ENCODE measurements at regions of chr18 and their contacts with region 1.

Region 1: GRCh38 chr18:7566567-7567473 is at the start of gene PTPRM:
- DNase-seq: peak; percentile 59 to 94 (median 70)

Region 2: GRCh38 chr18:7272311-7273049 is 294.3 kb before region 1 on chr18:
- intact Hi-C with region 1: loop called (anchors 1 kb)
- DNase-seq: peak; percentile 47 to 93 (median 73)

Region 3: GRCh38 chr18:7369006-7369405 is 197.8 kb before region 1 on chr18:
- intact Hi-C with region 1: loop called (anchors 10 kb)
- DNase-seq: no peak

Region 4: GRCh38 chr18:7459851-7460770 is 106.7 kb before region 1 on chr18:
- intact Hi-C with region 1: loop called (anchors 10 kb)
- DNase-seq: peak in 7 of 10 donors; percentile 13 to 89 (median 53)

Region 5: DNA sequence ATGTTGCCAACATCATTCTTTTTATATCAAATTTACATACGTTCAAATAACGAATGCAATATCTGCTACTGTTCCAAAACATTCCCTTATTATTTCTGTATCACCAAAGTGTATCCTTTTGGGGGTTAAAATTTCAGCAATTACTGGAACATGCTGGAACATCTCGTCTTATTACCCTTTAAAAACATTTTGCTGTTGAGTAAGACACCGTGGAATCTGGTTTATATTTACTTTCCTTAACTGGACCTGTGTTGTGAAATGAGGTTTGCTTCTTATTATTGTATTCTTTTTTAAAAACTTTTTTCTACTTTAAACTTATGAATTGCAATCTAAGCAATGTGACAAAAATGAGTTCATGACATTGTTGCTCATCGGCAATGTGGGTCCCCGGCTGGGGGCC is 87.1 kb before region 1 on chr18:
- intact Hi-C with region 1: no loop called
- DNase-seq: no peak

Region 6: DNA sequence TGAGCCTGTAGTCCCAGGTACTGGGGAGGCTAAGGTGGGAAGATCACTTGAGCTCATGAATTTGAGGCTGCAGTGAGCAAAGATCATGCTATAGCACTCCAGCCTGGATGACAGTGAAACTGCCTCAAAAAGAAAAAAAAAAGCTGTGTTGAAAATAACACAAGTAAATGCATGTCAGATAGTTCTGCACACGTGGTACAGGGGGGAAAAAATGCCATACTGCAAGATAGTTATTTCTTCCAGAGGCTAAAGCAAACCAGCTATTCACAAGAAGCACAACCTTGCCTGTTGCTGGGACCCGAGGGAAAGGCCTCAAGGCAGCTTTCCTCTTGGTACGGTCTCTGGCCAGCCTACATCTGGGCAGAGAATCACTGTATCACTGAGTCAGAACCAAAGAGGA is 1355.8 kb after region 1 on chr18:
- intact Hi-C with region 1: no loop called
- DNase-seq: no peak

Measured in posterior cingulate gyrus (tissue), 11 donors.